Brain microvascular endothelial cell (primary cell): ENCODE measurements at regions of chr12 and their contacts with region 1.

Region 1: DNA sequence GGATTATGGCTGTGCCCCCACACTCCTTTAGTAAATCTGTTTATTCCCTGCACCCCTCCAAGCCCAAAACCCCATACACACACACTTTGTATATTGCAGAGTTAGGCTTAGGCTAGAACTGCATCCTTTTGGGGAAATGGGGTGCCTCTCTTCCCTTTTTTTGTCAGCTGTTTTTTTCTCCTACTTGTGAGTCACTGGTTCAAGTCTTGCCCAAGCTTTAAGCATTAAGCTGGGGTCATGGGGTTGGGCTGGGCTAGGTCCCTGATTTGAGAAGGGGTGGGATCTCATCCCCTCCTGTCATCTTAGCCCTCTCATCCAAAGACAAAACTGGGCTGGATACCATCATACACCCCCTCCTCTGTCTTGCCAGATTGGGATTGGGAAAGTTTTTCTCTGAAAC is 1.6 kb downstream of the LRP1 start:
- DNase-seq: no peak
- H3K4me3 ChIP-seq: peak overlapping the region; percentile 78
- H3K27ac ChIP-seq: no peak overlapping the region
- H3K27me3 ChIP-seq: no peaks in the 10 kb centered on the region
- CTCF ChIP-seq: no peak

Region 2: DNA sequence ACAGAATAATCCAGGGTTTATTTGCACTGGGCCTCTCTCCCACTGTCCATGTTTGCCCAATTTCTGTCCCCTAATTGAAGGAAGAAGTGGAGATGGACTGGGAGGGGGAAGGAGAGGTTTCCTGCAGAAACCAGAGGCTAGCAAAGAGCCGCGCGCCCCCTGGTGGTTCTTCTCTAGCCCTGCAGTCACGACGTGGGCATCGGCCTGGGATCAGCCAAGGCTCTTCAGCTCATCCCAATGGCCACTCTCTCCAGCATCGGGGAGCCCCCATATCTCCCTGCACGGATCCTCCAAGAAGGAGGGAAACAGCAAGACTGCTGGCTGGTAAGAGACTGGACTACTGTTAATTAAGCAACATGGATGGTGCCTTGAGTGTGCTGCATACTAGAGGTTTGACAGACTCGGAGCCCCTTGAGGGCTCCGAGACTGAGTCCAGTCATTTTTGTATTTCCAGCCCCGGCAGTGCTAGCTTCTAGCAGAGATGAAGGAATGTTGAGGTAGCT is 142.3 kb before region 1 on chr12:
- in situ Hi-C with region 1: no loop called
- DNase-seq: peak; percentile 57
- H3K4me3 ChIP-seq: no peak overlapping the region
- H3K27ac ChIP-seq: no peak overlapping the region
- H3K27me3 ChIP-seq: no peaks in the 10 kb centered on the region
- CTCF ChIP-seq: peak; percentile 99

Region 3: DNA sequence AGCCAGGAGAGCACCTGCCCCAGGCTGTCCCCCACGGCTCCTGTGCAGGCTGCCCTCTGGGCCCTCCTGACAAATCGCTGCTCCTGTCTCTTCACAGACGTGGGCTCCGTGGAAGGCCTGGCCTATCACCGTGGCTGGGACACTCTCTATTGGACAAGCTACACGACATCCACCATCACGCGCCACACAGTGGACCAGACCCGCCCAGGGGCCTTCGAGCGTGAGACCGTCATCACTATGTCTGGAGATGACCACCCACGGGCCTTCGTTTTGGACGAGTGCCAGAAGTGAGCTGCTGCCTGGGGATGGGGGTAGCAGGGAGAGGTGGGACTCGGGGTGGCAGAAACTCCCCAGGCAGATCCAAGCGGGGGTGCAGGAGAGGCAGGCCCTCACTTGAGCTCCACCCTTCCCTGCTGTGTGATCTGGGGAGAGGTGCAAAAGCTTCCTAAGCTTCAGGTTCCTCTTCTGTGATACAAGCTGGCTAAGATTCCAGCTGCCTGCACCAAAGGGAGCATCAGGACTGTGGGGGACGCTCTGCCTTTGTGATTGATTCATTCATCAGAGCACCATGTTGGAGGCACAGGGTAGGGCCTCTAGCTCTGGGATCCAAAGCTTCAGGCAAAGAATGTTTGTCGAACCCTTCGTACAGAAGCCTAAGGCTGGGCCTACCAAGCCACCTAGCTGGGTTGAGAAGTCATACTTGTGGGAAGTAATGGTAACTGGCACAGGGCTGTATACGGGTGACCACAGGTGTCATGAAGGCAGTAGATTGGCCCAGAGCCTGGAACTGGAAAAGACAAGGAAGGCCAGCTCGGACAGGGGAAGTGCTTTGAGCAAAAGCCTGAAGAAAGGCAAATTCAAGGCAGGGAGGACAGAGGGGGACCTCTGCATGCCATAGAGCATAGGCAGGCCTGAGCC is 57.5 kb after region 1 on chr12:
- in situ Hi-C with region 1: loop called (anchors 5 kb)
- DNase-seq: no peak
- H3K4me3 ChIP-seq: no peak overlapping the region
- H3K27ac ChIP-seq: no peak overlapping the region
- H3K27me3 ChIP-seq: no peaks in the 10 kb centered on the region
- CTCF ChIP-seq: no peak

Region 4: DNA sequence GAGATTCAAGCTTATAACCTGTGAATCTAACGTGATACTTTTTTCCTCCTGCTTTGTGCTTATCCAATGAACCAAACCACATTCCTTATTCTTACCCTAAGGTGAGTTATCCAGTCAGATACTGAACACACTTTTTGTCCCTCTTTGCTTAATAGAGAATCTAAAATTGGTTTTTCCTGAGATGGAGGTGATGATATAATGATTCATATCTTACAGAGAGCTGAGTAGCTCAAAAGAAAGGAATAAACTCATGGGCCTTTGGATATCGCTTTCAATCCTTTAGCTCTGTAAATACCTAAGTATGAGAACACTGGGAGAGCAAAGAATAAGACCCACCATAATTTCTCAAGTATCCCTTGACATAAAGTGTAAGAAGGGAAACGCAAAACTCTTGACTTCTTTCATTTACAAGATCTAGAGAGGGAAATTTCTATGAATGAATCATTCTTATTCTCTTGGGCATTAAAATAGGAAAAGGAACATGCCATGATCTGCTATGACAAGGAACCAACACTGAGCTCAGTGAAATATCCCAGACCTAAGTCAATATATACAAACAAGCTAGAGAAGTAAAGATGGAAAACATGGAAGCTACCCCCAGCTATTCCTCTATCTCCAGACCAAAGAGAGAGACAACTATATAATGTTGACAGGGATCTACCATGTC is 202.9 kb after region 1 on chr12:
- in situ Hi-C with region 1: no loop called
- DNase-seq: no peak
- H3K4me3 ChIP-seq: no peak overlapping the region
- H3K27ac ChIP-seq: no peak overlapping the region
- H3K27me3 ChIP-seq: no peaks in the 10 kb centered on the region
- CTCF ChIP-seq: no peak